ENCODE measurements at regions of chr2 and their contacts with region 1.

Region 1: GRCh38 chr2:85826990-85827878 is 61.6 kb downstream of the ST3GAL5 start:
- DNase-seq: peak; percentile 57 to 89 (median 66)
- ATAC-seq: peak; percentile 77 to 96 (median 94)
- H3K4me3 ChIP-seq: peak overlapping the region in 4 of 12 donors; percentile 17 to 24 (median 20)
- H3K27ac ChIP-seq: no peak overlapping the region
- H3K4me1 ChIP-seq: peaks cover 0 to 9% (median 5%) of the 10 kb centered on the region in 12 donors
- H3K27me3 ChIP-seq: no peaks in the 10 kb centered on the region
- CTCF ChIP-seq: peak; percentile 83 to 97 (median 92)
- POLR2A ChIP-seq: no peak

Region 2: DNA sequence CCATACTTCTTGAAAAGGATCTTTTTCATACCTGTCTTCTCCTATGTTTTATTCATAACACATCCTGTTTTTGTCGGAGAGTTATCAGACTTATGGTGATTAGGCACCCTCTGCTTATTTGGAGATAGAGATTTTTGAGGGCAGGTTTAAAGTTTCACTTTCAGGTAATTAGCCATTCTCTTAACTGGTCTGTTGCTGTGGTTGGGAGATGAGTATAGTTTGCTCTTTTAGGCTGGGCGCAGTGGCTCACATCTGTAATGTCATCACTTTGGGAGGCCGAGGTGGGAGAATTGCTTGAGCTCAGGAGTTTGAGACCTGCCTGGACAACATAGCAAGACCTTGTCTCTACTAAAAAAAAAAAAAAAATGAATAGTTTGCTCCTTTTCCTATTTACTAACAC is 184.5 kb before region 1 on chr2:
- intact Hi-C with region 1: no loop called
- DNase-seq: no peak
- ATAC-seq: no peak
- H3K4me3 ChIP-seq: no peak overlapping the region
- H3K27ac ChIP-seq: no peak overlapping the region
- H3K4me1 ChIP-seq: peaks cover 0 to 2% (median 0%) of the 10 kb centered on the region in 12 donors
- H3K27me3 ChIP-seq: no peaks in the 10 kb centered on the region
- CTCF ChIP-seq: no peak
- POLR2A ChIP-seq: no peak

Region 3: DNA sequence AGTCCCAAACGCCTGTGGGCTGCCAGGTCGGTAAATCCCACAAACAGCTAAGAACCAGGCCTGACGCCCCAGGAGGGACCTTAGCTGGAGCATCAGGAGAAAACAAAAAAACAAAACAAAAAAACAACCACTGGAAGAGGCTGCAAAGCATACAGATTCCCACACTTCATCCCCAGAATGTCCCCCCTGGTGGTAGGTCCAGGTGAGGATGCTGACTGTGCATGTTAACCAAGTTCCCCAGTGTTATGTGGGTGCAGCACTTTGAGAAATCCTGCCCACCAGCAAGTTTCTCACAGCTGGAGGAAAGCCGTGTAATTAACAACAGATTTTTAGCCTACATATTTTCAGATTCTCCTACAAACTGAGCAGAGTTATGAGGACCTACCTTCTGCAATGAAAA is 46.4 kb after region 1 on chr2:
- intact Hi-C with region 1: loop called in 1 of 10 experiments (anchors 5 kb)
- DNase-seq: no peak
- ATAC-seq: no peak
- H3K4me3 ChIP-seq: no peak overlapping the region
- H3K27ac ChIP-seq: no peak overlapping the region
- H3K4me1 ChIP-seq: peaks cover 0 to 39% (median 0%) of the 10 kb centered on the region in 12 donors
- H3K27me3 ChIP-seq: no peaks in the 10 kb centered on the region
- CTCF ChIP-seq: peak in 1 of 12 donors; percentile 14
- POLR2A ChIP-seq: no peak

Region 4: GRCh38 chr2:86072271-86072858 is 245.1 kb after region 1 on chr2:
- intact Hi-C with region 1: loop called in 1 of 10 experiments (anchors 2 kb)
- DNase-seq: peak; percentile 61 to 80 (median 66)
- ATAC-seq: peak; percentile 67 to 84 (median 80)
- H3K4me3 ChIP-seq: no peak overlapping the region
- H3K27ac ChIP-seq: peak overlapping the region in 11 of 12 donors; percentile 23 to 72 (median 61)
- H3K4me1 ChIP-seq: peaks cover 0 to 38% (median 16%) of the 10 kb centered on the region in 12 donors
- H3K27me3 ChIP-seq: no peaks in the 10 kb centered on the region
- CTCF ChIP-seq: no peak
- POLR2A ChIP-seq: no peak

Measured in heart left ventricle (tissue), 16 donors.